Cardiac septum (tissue), 1 donor: ENCODE measurements at regions of chr5 and their contacts with region 1.

Region 1: GRCh38 chr5:1975898-1976765 is 93.4 kb upstream of the IRX4 start:
- DNase-seq: peak; percentile 24

Region 2: DNA sequence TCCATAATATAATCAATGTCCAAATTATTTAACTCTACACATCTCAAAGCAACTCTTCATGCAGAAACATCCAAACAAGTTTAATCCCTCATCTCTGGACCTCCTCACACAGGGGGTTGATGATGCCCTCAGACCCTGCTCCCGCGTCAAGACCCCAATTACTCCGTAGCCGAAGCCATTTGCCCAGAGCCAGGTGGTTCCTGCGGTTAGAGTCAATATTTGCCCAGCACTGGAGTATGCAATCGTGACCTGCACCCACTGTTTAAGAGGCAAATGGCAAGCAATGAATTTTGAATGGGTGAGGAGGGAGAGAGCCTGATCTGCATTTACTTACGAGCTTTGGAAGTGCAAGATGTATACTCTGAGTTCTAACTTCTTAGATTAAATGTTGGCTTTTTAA is 178.6 kb after region 1 on chr5:
- intact Hi-C with region 1: loop called (anchors 5 kb)
- DNase-seq: no peak